ENCODE measurements at regions of chr10 and their contacts with region 1.

Region 1: DNA sequence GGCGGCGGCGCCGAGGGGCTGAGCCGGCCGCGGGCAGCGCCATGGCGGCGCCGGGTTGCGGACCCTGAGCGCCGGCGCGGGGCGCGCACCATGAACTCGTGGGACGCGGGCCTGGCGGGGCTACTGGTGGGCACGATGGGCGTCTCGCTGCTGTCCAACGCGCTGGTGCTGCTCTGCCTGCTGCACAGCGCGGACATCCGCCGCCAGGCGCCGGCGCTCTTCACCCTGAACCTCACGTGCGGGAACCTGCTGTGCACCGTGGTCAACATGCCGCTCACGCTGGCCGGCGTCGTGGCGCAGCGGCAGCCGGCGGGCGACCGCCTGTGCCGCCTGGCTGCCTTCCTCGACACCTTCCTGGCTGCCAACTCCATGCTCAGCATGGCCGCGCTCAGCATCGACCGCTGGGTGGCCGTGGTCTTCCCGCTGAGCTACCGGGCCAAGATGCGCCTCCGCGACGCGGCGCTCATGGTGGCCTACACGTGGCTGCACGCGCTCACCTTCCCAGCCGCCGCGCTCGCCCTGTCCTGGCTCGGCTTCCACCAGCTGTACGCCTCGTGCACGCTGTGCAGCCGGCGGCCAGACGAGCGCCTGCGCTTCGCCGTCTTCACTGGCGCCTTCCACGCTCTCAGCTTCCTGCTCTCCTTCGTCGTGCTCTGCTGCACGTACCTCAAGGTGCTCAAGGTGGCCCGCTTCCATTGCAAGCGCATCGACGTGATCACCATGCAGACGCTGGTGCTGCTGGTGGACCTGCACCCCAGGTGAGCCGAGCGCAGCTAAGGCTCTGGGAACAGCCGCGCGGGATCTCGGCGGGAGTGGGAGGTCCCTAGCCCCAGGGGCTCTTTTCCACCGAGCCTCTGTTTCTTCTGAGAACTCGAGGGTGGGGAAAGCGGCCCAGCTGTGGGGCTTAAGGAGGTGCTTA is at the start of gene GPR26:
- DNase-seq: no peak
- H3K4me3 ChIP-seq: no peak within 1 kb of the TSS
- H3K27ac ChIP-seq: no peak within 1 kb of the TSS
- H3K4me1 ChIP-seq: no peaks in the 10 kb centered on the region
- H3K27me3 ChIP-seq: no peaks in the 10 kb centered on the region
- CTCF ChIP-seq: no peak
- EP300 ChIP-seq: no peak
- POLR2A ChIP-seq: no peak
- total RNA-seq, gene GPR26: not detected

Region 2: DNA sequence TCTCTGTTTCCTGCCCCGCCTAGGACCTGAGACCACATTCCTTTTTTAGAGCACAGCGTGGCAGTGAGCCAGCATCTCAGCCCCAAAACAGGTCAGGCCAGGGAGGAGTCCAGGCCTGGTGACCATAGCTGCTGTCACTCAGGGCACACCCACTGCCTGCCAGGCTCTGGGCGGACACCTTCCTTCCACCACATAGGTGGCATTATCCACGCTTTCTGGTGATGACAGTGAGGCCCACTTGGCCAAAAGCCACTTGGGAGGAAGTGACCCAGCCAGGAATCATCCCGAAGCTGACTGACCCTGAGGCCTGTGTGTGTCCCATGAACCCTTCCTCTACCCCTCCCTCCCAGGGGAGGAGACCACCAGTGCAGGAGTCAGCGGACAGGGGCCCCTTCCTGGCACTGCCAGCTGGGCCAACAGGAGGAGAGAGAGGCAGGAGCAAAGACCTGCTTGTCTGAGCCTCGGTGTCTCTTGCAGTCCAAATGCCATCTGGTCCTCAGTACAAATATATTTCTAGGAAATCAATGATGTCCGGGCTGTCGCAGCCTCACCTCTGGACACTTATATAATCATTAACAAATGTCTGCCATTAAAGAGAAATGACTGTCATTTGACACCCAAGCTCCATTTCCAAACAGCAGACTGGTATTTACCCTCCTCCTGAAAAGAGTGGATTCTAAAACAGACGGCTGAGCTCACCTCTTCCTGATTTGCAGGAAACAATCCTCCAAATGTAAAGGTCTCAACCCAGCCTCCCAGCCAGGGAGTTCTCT is 1198.0 kb after region 1 on chr10:
- intact Hi-C with region 1: loop called in 1 of 4 experiments (anchors 10 kb)
- DNase-seq: no peak
- H3K4me3 ChIP-seq: no peak overlapping the region
- H3K27ac ChIP-seq: no peak overlapping the region
- H3K4me1 ChIP-seq: no peaks in the 10 kb centered on the region
- H3K27me3 ChIP-seq: no peaks in the 10 kb centered on the region
- CTCF ChIP-seq: no peak
- EP300 ChIP-seq: no peak
- POLR2A ChIP-seq: no peak